ENCODE measurements at regions of chr16 and their contacts with region 1.

Region 1: GRCh38 chr16:89217388-89218191 is at the start of gene ZNF778:
- DNase-seq: peak; percentile 80
- ATAC-seq: peak; percentile 86
- H3K4me3 Mint-ChIP-seq: peak within 1 kb of the TSS; percentile 91
- H3K27ac Mint-ChIP-seq: peak within 1 kb of the TSS; percentile 93
- H3K4me1 Mint-ChIP-seq: peaks cover 19% of the 10 kb centered on the region
- H3K27me3 Mint-ChIP-seq: no peaks in the 10 kb centered on the region
- CTCF ChIP-seq: no peak
- total RNA-seq, gene ZNF778: 7.2 and 11.4 TPM in 2 replicates

Region 2: DNA sequence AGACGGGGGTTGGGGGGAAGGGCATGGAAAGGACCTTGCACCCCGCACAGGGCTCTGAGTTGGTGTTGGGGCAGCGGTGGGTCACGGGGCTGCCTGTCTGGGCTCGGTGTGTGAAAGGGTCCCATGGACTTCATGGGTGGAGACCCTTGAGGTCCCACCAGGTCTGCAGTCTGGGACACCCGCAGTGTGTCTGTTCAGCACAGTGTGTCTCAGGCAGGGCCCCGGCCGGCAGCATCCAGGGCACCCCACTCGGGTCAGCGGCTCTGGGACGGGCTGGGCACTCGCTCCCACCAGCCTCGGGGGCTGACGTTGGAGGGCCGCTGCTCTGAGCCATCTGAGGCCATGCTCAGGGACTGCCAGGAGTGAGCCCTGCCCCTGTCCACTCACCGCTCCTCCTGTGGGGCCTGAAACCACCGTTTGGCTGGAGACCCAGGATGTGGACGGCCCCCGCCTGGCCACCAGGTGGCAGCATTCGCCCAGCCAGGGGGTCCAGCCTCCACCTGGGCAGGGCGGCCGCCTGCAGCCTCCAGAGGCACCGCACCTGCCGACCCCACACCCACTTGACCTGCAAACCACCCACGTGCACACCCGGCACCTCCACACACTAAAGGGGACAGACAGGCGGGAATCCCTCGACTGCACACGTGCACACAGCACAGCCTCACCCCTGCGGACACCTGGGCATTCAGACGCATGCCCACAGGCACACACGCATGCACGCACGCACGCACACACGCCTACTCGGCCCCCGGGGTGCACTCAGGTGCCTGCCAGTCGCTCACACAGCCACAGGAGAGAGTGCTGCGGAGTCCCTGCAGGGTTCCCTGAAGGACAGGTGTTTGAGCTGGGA is 774.6 kb before region 1 on chr16:
- CTCF ChIA-PET with region 1: no interaction called
- POLR2A ChIA-PET with region 1: no interaction called
- intact Hi-C with region 1: loop called (anchors 10 kb)
- DNase-seq: peak; percentile 83
- ATAC-seq: peak; percentile 89
- H3K4me3 Mint-ChIP-seq: no peak overlapping the region
- H3K27ac Mint-ChIP-seq: peak overlapping the region; percentile 12
- H3K4me1 Mint-ChIP-seq: peaks cover 5% of the 10 kb centered on the region
- H3K27me3 Mint-ChIP-seq: no peaks in the 10 kb centered on the region
- CTCF ChIP-seq: peak; percentile 57

Region 3: GRCh38 chr16:88737298-88738150 is 480.1 kb before region 1 on chr16:
- CTCF ChIA-PET with region 1: interaction called, 36 read pairs
- POLR2A ChIA-PET with region 1: interaction called, 10 read pairs
- intact Hi-C with region 1: loop called (anchors 1 kb)
- DNase-seq: peak; percentile 77
- ATAC-seq: peak; percentile 97
- H3K4me3 Mint-ChIP-seq: no peak overlapping the region
- H3K27ac Mint-ChIP-seq: no peak overlapping the region
- H3K4me1 Mint-ChIP-seq: peaks cover 6% of the 10 kb centered on the region
- H3K27me3 Mint-ChIP-seq: no peaks in the 10 kb centered on the region
- CTCF ChIP-seq: peak; percentile 95

Region 4: GRCh38 chr16:88811769-88812512 is 405.6 kb before region 1 on chr16 and contains the start of gene APRT:
- CTCF ChIA-PET with region 1: interaction called, 3 read pairs
- POLR2A ChIA-PET with region 1: interaction called, 16 read pairs
- intact Hi-C with region 1: loop called (anchors 1 kb)
- DNase-seq: peak; percentile 99
- ATAC-seq: peak; percentile 86
- H3K4me3 Mint-ChIP-seq: peak within 1 kb of the TSS; percentile 91
- H3K27ac Mint-ChIP-seq: peak within 1 kb of the TSS; percentile 97
- H3K4me1 Mint-ChIP-seq: peaks cover 17% of the 10 kb centered on the region
- H3K27me3 Mint-ChIP-seq: no peaks in the 10 kb centered on the region
- CTCF ChIP-seq: no peak
- total RNA-seq, gene APRT: 198 and 209 TPM in 2 replicates

Region 5: DNA sequence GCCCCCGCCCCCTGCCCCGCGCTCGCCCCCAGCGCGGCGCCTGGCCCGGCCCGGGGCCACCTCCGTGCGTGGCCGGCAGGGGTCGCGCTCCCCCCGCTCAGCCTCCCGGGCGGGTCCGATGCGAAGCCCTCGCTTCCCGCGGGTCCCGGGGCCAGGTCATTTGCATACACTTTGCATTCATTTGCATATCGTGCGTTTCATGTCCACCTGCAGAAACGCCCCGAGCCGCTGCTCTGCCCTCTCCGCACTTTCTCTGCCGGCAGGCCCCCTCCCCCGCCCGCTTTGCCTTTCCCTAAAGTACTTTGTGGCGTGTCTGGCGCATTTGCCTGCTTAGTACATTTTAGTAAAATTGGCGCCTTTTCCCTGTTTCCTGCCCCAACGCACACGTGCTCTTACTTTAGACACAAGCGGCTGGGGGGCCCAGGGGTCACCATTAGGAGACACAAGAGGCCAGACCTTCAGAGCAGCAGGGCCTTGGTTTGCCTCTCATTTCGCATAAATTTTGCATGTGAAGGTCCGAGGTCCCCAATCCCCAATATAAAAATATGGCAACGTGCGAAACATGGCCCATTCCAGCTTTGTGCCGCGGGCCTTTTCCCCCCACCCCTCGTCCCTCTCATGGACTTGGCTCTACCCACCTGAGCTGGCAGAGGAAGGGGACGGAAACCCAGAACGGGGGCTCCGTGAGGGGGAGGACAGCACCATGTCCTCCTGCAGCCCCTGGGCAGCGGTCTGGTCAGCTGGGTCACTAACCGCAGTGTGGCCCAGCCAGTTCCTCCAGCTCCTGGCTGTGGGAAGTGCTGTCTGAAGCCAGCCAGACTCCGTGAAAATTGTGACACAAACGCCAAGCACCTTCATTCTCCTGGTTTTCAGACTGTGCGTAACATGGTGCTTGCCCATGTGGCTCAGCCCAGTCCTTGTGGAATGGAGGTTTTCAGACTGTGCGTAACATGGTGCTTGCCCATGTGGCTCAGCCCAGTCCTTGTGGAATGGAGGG is 275.4 kb before region 1 on chr16:
- CTCF ChIA-PET with region 1: interaction called, 4 read pairs
- POLR2A ChIA-PET with region 1: no interaction called
- intact Hi-C with region 1: loop called (anchors 1 kb)
- DNase-seq: peak; percentile 77
- ATAC-seq: peak; percentile 67
- H3K4me3 Mint-ChIP-seq: peak overlapping the region; percentile 79
- H3K27ac Mint-ChIP-seq: peak overlapping the region; percentile 66
- H3K4me1 Mint-ChIP-seq: peaks cover 46% of the 10 kb centered on the region
- H3K27me3 Mint-ChIP-seq: no peaks in the 10 kb centered on the region
- CTCF ChIP-seq: peak; percentile 54

Region 6: DNA sequence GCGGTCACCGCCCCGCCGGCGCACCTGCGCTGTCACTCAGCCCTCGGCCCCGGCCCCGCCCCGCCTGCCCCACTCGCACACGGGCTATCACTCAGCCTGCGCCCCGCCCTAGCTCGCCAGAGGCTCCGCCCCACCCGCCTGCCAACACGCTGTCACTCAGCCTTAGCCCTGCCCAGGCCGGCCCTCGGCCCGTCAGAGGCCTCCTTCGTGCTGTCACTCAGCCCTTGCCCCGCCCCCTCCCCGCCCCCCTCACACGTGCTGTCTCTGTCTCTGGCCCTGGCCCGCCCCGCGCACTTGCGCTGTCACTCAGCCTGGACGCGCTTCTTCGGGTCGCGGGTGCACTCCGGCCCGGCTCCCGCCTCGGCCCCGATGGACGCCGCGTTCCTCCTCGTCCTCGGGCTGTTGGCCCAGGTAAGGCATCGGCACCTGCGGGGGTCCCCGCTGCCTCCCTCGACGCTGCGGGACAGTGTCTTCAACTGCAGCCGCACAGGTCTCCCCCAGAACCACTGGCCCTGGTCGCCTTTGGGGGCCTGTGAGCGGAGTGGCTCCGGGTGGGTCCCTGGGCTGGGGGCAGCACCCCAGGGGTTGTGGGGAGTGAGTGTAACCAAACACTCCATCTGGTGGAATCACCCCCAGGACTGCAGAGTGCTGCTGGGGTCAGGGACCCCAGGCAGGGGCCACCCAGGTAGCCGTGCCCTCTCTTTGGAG is 46.0 kb before region 1 on chr16 and contains the start of gene CDH15:
- CTCF ChIA-PET with region 1: no interaction called
- POLR2A ChIA-PET with region 1: interaction called, 4 read pairs
- intact Hi-C with region 1: loop called (anchors 1 kb)
- DNase-seq: peak; percentile 84
- ATAC-seq: peak; percentile 96
- H3K4me3 Mint-ChIP-seq: peak within 1 kb of the TSS; percentile 66
- H3K27ac Mint-ChIP-seq: no peak within 1 kb of the TSS
- H3K4me1 Mint-ChIP-seq: peaks cover 12% of the 10 kb centered on the region
- H3K27me3 Mint-ChIP-seq: peaks cover 2% of the 10 kb centered on the region
- CTCF ChIP-seq: no peak
- total RNA-seq, gene CDH15: not detected in 2 replicates